B cell (primary cell): ENCODE measurements at regions of chr4 and their contacts with region 1.

Region 1: GRCh38 chr4:27010334-27010940 is 149.8 kb downstream of the STIM2 start:
- DNase-seq: peak; percentile 73
- ATAC-seq: peak; percentile 80
- H3K4me3 ChIP-seq: no peak overlapping the region
- H3K4me3 Mint-ChIP-seq: no peak overlapping the region
- H3K27ac ChIP-seq: no peak overlapping the region
- H3K27ac Mint-ChIP-seq: peak overlapping the region; percentile 57
- H3K4me1 ChIP-seq: no peaks in the 10 kb centered on the region
- H3K4me1 Mint-ChIP-seq: peaks cover 9% of the 10 kb centered on the region
- H3K27me3 ChIP-seq: no peaks in the 10 kb centered on the region
- H3K27me3 Mint-ChIP-seq: no peaks in the 10 kb centered on the region
- CTCF ChIP-seq: peak; percentile 99

Region 2: DNA sequence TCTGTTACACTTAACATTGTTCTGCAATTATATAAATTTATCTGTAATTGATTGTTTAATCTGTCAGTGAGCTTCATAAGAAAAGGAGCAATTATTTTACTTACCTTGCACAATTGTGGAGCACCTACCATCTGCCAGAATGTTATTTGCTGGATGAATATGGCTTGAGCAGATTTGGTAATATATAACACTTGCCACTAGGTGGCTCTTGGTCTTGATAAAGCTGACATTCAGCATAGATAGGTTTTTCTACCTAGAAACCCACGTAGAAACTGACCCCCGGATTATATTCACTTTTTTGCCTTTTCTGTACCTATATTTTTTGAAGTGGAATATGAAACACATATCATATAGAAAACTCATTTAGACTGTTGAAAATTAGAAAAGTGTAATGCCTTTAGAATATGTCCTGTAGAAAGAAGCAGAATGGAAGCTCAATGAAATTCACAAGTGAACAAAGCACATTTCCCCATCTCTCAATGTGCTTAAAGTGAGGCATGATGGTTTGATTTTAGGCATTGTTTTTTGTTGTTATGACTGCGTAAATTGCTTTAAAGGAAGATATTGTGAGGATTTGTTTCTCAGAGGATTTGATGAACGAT is 680.1 kb before region 1 on chr4:
- CTCF ChIA-PET with region 1: interaction called, 9 read pairs
- POLR2A ChIA-PET with region 1: no interaction called
- intact Hi-C with region 1: loop called (anchors 5 kb)
- DNase-seq: peak; percentile 69
- ATAC-seq: peak; percentile 79
- H3K4me3 ChIP-seq: no peak overlapping the region
- H3K4me3 Mint-ChIP-seq: no peak overlapping the region
- H3K27ac ChIP-seq: no peak overlapping the region
- H3K27ac Mint-ChIP-seq: no peak overlapping the region
- H3K4me1 ChIP-seq: no peaks in the 10 kb centered on the region
- H3K4me1 Mint-ChIP-seq: peaks cover 26% of the 10 kb centered on the region
- H3K27me3 ChIP-seq: no peaks in the 10 kb centered on the region
- H3K27me3 Mint-ChIP-seq: no peaks in the 10 kb centered on the region
- CTCF ChIP-seq: peak; percentile 90

Region 3: GRCh38 chr4:26342328-26343037 is 668.0 kb before region 1 on chr4:
- CTCF ChIA-PET with region 1: no interaction called
- POLR2A ChIA-PET with region 1: no interaction called
- intact Hi-C with region 1: no loop called
- DNase-seq: no peak
- ATAC-seq: no peak
- H3K4me3 ChIP-seq: no peak overlapping the region
- H3K4me3 Mint-ChIP-seq: no peak overlapping the region
- H3K27ac ChIP-seq: no peak overlapping the region
- H3K27ac Mint-ChIP-seq: no peak overlapping the region
- H3K4me1 ChIP-seq: no peaks in the 10 kb centered on the region
- H3K4me1 Mint-ChIP-seq: peaks cover 49% of the 10 kb centered on the region
- H3K27me3 ChIP-seq: no peaks in the 10 kb centered on the region
- H3K27me3 Mint-ChIP-seq: no peaks in the 10 kb centered on the region
- CTCF ChIP-seq: no peak

Region 4: GRCh38 chr4:26583865-26584652 is 426.4 kb before region 1 on chr4 and contains the start of gene TBC1D19:
- CTCF ChIA-PET with region 1: interaction called, 10 read pairs
- POLR2A ChIA-PET with region 1: no interaction called
- intact Hi-C with region 1: loop called (anchors 1 kb)
- DNase-seq: peak; percentile 90
- ATAC-seq: peak; percentile 95
- H3K4me3 ChIP-seq: peak within 1 kb of the TSS; percentile 43 to 92 (median 82)
- H3K4me3 Mint-ChIP-seq: peak within 1 kb of the TSS; percentile 88
- H3K27ac ChIP-seq: peak within 1 kb of the TSS; percentile 85 to 87
- H3K27ac Mint-ChIP-seq: peak within 1 kb of the TSS; percentile 91
- H3K4me1 ChIP-seq: peaks cover 11 to 13% of the 10 kb centered on the region in 2 donors
- H3K4me1 Mint-ChIP-seq: peaks cover 26% of the 10 kb centered on the region
- H3K27me3 ChIP-seq: no peaks in the 10 kb centered on the region
- H3K27me3 Mint-ChIP-seq: peaks cover 7% of the 10 kb centered on the region
- CTCF ChIP-seq: no peak
- total RNA-seq, gene TBC1D19: 10.0 and 11.0 TPM in 2 replicates

Region 5: DNA sequence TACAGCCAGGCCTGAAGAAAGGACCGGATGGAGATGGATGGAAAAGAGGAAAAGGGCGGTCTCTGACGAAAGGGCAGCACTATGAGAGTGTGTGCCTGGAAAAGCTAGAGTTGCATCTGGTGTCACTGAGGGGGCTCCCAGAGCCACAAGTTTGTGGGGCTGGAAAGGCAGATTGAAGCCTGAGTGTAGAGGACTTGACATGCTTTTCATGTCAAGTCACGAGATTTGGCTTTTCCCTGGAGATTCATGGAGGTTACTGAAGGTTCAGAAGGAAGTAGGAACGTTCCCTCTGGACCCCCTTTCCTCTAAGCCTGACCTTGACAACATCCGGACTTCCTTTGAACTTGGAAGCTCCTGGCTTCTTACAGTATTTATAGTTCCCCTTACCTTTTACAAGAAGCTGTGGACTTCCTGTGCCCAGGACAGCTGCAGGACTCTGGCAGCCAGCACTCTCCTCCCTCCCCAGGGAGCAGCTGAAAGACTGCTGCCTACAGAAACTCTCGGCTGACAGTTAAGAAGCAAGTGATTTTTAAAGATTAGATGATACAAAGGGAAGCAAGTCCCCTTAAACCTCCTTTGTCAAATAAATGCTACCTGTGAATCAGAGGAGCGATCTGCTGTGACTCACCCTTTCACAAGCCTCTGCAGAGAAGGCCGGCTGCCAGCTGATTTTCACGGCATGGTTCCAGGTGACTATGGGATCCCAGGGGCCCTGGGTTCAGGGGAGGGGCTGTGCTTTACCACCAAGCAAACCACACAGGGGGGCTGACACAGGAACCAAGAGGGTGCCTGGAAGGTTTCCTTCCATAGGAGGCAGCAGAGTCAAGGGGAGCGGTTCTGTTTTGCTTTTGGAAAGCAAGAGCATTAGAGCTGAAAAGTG is 222.7 kb before region 1 on chr4:
- CTCF ChIA-PET with region 1: interaction called, 7 read pairs
- POLR2A ChIA-PET with region 1: no interaction called
- intact Hi-C with region 1: loop called (anchors 1 kb)
- DNase-seq: peak; percentile 53
- ATAC-seq: peak; percentile 44
- H3K4me3 ChIP-seq: no peak overlapping the region
- H3K4me3 Mint-ChIP-seq: peak overlapping the region; percentile 30
- H3K27ac ChIP-seq: no peak overlapping the region
- H3K27ac Mint-ChIP-seq: no peak overlapping the region
- H3K4me1 ChIP-seq: peaks cover 29 to 31% of the 10 kb centered on the region in 2 donors
- H3K4me1 Mint-ChIP-seq: peaks cover 33% of the 10 kb centered on the region
- H3K27me3 ChIP-seq: peaks cover 0 to 15% (median 6%) of the 10 kb centered on the region in 4 experiments
- H3K27me3 Mint-ChIP-seq: peaks cover 14% of the 10 kb centered on the region
- CTCF ChIP-seq: peak; percentile 35

Region 6: GRCh38 chr4:26860157-26860921 is 150.1 kb before region 1 on chr4 and contains the start of gene STIM2:
- CTCF ChIA-PET with region 1: interaction called, 26 read pairs
- POLR2A ChIA-PET with region 1: interaction called, 7 read pairs
- intact Hi-C with region 1: loop called (anchors 1 kb)
- DNase-seq: peak; percentile 99
- ATAC-seq: peak; percentile 64
- H3K4me3 ChIP-seq: peak within 1 kb of the TSS; percentile 75 to 95 (median 80)
- H3K4me3 Mint-ChIP-seq: peak within 1 kb of the TSS; percentile 100
- H3K27ac ChIP-seq: peak within 1 kb of the TSS; percentile 77 to 86
- H3K27ac Mint-ChIP-seq: peak within 1 kb of the TSS; percentile 99
- H3K4me1 ChIP-seq: peaks cover 37 to 56% of the 10 kb centered on the region in 2 donors
- H3K4me1 Mint-ChIP-seq: peaks cover 61% of the 10 kb centered on the region
- H3K27me3 ChIP-seq: no peaks in the 10 kb centered on the region
- H3K27me3 Mint-ChIP-seq: no peaks in the 10 kb centered on the region
- CTCF ChIP-seq: peak; percentile 52
- total RNA-seq, gene STIM2: 96.0 and 103 TPM in 2 replicates

Region 7: GRCh38 chr4:26936284-26937065 is 74.0 kb before region 1 on chr4:
- CTCF ChIA-PET with region 1: interaction called, 8 read pairs
- POLR2A ChIA-PET with region 1: no interaction called
- intact Hi-C with region 1: loop called (anchors 5 kb)
- DNase-seq: no peak
- ATAC-seq: no peak
- H3K4me3 ChIP-seq: no peak overlapping the region
- H3K4me3 Mint-ChIP-seq: peak overlapping the region; percentile 4
- H3K27ac ChIP-seq: peak overlapping the region in 1 of 2 donors; percentile 72
- H3K27ac Mint-ChIP-seq: peak overlapping the region; percentile 59
- H3K4me1 ChIP-seq: peaks cover 34 to 43% of the 10 kb centered on the region in 2 donors
- H3K4me1 Mint-ChIP-seq: peaks cover 57% of the 10 kb centered on the region
- H3K27me3 ChIP-seq: no peaks in the 10 kb centered on the region
- H3K27me3 Mint-ChIP-seq: no peaks in the 10 kb centered on the region
- CTCF ChIP-seq: no peak